Activated CD8-positive, alpha-beta T cell treated with anti-CD3 and anti-CD28 coated beads for 36 hours (primary cell): ENCODE measurements at regions of chr6 and their contacts with region 1.

Region 1: DNA sequence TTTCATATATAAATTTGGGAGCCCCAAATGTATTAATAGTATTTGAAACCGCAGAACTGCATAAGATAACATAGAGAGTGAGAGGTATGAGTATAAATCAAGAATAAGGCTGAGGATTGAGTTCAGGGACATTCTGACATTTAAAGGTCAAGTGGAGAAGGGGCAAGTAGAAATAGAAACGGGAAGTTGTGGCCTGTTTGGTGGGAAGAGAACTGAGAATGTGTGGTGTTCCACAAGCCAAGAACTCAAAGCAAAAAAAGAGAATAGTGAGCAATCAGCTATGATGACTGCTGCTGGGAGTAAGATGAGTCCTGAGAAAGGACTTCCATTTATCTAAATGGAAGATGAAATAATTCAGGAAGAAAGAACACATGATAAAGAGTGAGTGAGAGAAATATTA is 418.4 kb downstream of the CD109 start:
- DNase-seq: no peak
- ATAC-seq: no peak
- H3K4me3 Mint-ChIP-seq: no peak overlapping the region
- H3K27ac Mint-ChIP-seq: no peak overlapping the region
- H3K4me1 Mint-ChIP-seq: no peaks in the 10 kb centered on the region
- H3K27me3 Mint-ChIP-seq: peaks cover 5% of the 10 kb centered on the region
- CTCF ChIP-seq: no peak

Region 2: GRCh38 chr6:74091136-74091793 is 23.2 kb before region 1 on chr6:
- CTCF ChIA-PET with region 1: interaction called, 10 read pairs
- POLR2A ChIA-PET with region 1: no interaction called
- intact Hi-C with region 1: no loop called
- DNase-seq: no peak
- ATAC-seq: no peak
- H3K4me3 Mint-ChIP-seq: no peak overlapping the region
- H3K27ac Mint-ChIP-seq: no peak overlapping the region
- H3K4me1 Mint-ChIP-seq: no peaks in the 10 kb centered on the region
- H3K27me3 Mint-ChIP-seq: peaks cover 7% of the 10 kb centered on the region
- CTCF ChIP-seq: peak; percentile 71

Region 3: DNA sequence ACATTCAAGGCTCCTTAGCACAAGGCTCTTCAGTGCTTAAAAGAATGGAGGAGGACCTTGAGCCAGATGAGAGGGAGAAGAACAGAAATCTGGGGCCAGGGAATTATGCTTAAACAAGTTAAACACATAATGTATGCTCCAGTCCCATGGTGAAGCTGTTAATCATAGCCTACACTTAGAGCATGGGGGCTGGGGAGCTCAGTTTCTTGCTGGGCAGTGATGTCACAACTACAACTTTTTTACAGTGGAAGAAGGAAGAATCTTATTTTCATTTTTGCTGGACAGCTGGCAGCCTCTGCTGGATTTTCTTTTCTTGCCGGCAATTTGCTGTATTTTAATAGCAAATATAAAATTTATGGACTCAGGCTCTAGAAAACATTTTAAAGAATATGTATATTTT is 14.1 kb after region 1 on chr6:
- CTCF ChIA-PET with region 1: no interaction called
- POLR2A ChIA-PET with region 1: no interaction called
- intact Hi-C with region 1: no loop called
- DNase-seq: no peak
- ATAC-seq: no peak
- H3K4me3 Mint-ChIP-seq: no peak overlapping the region
- H3K27ac Mint-ChIP-seq: no peak overlapping the region
- H3K4me1 Mint-ChIP-seq: no peaks in the 10 kb centered on the region
- H3K27me3 Mint-ChIP-seq: no peaks in the 10 kb centered on the region
- CTCF ChIP-seq: no peak

Region 4: GRCh38 chr6:74519163-74519562 is 404.7 kb after region 1 on chr6:
- CTCF ChIA-PET with region 1: no interaction called
- POLR2A ChIA-PET with region 1: no interaction called
- intact Hi-C with region 1: no loop called
- DNase-seq: no peak
- ATAC-seq: no peak
- H3K4me3 Mint-ChIP-seq: no peak overlapping the region
- H3K27ac Mint-ChIP-seq: no peak overlapping the region
- H3K4me1 Mint-ChIP-seq: no peaks in the 10 kb centered on the region
- H3K27me3 Mint-ChIP-seq: no peaks in the 10 kb centered on the region
- CTCF ChIP-seq: no peak